Right ventricle myocardium inferior (tissue), 1 donor: ENCODE measurements at regions of chr10 and their contacts with region 1.

Region 1: GRCh38 chr10:17454161-17455014 is at the start of gene ST8SIA6:
- DNase-seq: peak; percentile 77
- ATAC-seq: peak; percentile 77
- total RNA-seq, gene ST8SIA6: 9.3 TPM

Region 2: DNA sequence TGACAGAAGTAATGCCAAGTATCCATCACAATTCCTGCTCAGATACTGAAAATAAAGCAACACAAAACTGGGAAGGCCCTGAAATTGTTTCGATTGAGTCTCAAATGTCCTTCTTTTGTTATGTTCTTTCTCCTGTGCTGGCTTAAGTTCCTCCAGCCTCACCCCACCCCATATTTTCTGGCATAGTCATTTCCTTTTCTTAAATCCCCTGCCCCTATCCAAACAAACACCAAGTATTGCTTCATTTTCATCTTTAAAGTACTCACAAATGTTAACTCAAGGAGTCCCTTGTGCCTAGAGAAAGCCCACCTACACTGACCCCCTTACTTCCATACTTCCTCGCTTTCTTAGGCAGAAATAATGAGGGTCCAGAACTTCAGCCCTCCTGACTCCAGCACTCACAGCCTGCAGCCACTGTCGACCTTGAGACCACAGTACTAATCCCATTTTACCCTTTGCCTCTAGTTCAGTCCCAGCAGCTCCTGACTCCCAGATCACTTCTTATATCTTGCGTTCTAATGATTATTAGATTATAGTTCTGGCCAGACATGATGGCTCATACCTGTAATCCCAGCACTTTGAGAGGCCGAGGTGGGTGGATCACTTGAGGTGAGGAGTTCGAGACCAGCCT is 73.2 kb after region 1 on chr10:
- intact Hi-C with region 1: loop called (anchors 5 kb)
- DNase-seq: no peak
- ATAC-seq: no peak

Region 3: GRCh38 chr10:17599089-17599488 is 144.7 kb after region 1 on chr10:
- intact Hi-C with region 1: loop called (anchors 5 kb)
- DNase-seq: no peak
- ATAC-seq: no peak